Activated B cell treated with CpG ODN at 0.5 μM for 24 hours (primary cell): ENCODE measurements at regions of chr12 and their contacts with region 1.

Region 1: GRCh38 chr12:121590476-121591143 is 9.8 kb upstream of the KDM2B start:
- DNase-seq: peak; percentile 33
- ATAC-seq: peak; percentile 65
- H3K4me3 Mint-ChIP-seq: peak overlapping the region; percentile 81
- H3K27ac Mint-ChIP-seq: peak overlapping the region; percentile 98
- H3K4me1 Mint-ChIP-seq: peaks cover 40% of the 10 kb centered on the region
- H3K27me3 Mint-ChIP-seq: no peaks in the 10 kb centered on the region
- CTCF ChIP-seq: no peak

Region 2: DNA sequence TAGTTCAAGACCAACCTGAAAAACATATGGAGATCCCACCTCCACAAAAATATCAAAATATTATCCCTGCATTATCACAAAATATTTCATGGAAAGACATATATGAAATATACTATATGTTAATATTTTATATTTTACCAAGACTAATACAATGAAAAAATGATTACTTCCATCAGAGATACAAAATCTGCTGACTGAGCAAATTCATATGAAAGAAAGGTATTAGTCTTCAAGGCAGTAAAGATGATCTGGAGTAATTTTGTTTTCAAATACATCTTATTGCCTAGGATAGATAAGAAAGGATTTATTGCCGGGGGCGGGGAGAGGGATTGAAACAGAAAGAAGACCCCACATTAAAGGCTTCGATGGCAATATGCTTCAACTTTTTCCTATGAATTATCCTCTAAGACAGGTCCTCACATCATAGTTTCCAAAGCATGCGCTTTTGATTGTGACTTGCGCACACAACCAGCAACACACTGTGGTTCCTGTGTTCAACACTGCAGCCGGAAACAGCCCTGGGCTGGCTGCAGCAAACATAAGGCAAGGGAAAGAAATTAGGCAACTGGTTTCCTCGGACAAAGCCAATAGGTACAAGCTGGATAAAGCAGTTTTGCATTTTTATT is 769.6 kb before region 1 on chr12:
- CTCF ChIA-PET with region 1: no interaction called
- POLR2A ChIA-PET with region 1: no interaction called
- intact Hi-C with region 1: no loop called
- DNase-seq: no peak
- ATAC-seq: no peak
- H3K4me3 Mint-ChIP-seq: no peak overlapping the region
- H3K27ac Mint-ChIP-seq: no peak overlapping the region
- H3K4me1 Mint-ChIP-seq: peaks cover 23% of the 10 kb centered on the region
- H3K27me3 Mint-ChIP-seq: no peaks in the 10 kb centered on the region
- CTCF ChIP-seq: no peak

Region 3: DNA sequence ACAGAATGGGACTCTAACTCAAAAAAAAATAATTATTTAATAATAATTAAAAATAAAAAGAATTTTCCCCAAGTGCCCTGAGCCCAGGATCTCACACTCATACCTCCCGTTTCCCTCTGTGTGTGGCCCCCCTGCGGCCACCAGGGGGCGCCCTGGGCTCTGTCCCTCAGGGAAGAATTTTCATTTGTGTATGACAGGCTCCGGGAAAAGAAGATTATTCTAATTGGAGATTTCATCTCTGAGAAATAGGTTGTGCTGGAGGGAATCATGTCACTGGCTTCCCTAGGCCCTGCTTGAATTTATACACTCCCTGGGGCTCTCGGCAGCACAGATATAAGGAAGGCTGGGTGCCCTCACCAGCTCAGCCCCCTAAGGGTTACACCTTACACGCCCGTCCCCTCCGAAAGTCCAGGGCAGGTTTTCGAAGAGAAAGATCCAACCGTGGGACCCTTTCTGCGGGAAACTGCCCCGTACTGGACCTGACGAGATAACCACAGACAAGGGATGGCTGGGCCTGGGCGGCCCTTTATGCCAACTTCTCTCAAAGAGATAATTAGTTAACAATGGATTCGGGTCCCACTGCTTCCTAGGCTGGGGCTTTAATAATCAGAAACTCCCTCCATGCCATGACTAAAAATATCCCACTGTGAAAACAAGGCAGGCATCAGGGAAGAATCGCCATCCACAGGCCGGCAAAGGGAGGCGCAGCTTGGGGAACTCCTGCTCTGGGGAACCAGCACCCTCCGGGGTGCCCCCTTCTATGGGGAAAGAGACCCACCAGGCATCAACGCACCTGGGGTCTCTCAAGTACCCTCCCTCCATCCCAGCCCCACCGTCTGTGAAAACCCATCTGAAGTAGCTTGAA is 90.4 kb before region 1 on chr12:
- CTCF ChIA-PET with region 1: no interaction called
- POLR2A ChIA-PET with region 1: interaction called, 3 read pairs
- intact Hi-C with region 1: loop called (anchors 1 kb)
- DNase-seq: peak; percentile 69
- ATAC-seq: peak; percentile 82
- H3K4me3 Mint-ChIP-seq: no peak overlapping the region
- H3K27ac Mint-ChIP-seq: no peak overlapping the region
- H3K4me1 Mint-ChIP-seq: peaks cover 17% of the 10 kb centered on the region
- H3K27me3 Mint-ChIP-seq: no peaks in the 10 kb centered on the region
- CTCF ChIP-seq: peak; percentile 82

Region 4: GRCh38 chr12:121560392-121561008 is 30.1 kb before region 1 on chr12:
- CTCF ChIA-PET with region 1: no interaction called
- POLR2A ChIA-PET with region 1: interaction called, 56 read pairs
- intact Hi-C with region 1: loop called (anchors 1 kb)
- DNase-seq: peak; percentile 58
- ATAC-seq: peak; percentile 79
- H3K4me3 Mint-ChIP-seq: peak overlapping the region; percentile 84
- H3K27ac Mint-ChIP-seq: peak overlapping the region; percentile 97
- H3K4me1 Mint-ChIP-seq: peaks cover 55% of the 10 kb centered on the region
- H3K27me3 Mint-ChIP-seq: no peaks in the 10 kb centered on the region
- CTCF ChIP-seq: no peak

Region 5: DNA sequence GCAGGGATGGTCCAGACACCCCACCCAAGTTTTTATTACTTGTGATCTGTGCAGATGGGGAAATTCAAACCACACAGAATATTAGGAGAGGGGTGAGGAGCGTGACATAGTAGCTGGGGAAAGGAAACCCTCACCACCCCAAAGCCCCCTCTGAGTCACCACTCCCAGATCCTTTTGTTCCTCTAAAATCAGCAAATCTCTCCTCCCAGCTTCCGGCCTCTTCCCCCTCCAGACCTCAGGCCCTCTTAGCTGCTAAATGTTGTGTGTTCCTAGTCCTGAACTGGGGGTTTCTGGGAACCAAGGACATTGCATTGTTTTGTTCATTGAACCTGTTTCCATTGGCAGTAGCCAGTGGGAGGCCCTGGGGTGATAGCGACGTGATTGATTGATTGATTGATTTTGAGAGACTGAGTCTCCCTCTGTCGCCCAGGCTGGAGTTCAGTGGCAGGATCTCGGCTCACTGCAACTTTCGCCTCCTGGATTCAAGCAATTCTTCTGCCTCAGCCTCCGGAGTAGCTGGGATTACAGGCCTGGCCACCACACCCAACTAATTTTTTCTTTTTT is 29.8 kb after region 1 on chr12:
- CTCF ChIA-PET with region 1: interaction called, 5 read pairs
- POLR2A ChIA-PET with region 1: interaction called, 12 read pairs
- intact Hi-C with region 1: no loop called
- DNase-seq: no peak
- ATAC-seq: no peak
- H3K4me3 Mint-ChIP-seq: no peak overlapping the region
- H3K27ac Mint-ChIP-seq: no peak overlapping the region
- H3K4me1 Mint-ChIP-seq: peaks cover 32% of the 10 kb centered on the region
- H3K27me3 Mint-ChIP-seq: no peaks in the 10 kb centered on the region
- CTCF ChIP-seq: no peak

Region 6: DNA sequence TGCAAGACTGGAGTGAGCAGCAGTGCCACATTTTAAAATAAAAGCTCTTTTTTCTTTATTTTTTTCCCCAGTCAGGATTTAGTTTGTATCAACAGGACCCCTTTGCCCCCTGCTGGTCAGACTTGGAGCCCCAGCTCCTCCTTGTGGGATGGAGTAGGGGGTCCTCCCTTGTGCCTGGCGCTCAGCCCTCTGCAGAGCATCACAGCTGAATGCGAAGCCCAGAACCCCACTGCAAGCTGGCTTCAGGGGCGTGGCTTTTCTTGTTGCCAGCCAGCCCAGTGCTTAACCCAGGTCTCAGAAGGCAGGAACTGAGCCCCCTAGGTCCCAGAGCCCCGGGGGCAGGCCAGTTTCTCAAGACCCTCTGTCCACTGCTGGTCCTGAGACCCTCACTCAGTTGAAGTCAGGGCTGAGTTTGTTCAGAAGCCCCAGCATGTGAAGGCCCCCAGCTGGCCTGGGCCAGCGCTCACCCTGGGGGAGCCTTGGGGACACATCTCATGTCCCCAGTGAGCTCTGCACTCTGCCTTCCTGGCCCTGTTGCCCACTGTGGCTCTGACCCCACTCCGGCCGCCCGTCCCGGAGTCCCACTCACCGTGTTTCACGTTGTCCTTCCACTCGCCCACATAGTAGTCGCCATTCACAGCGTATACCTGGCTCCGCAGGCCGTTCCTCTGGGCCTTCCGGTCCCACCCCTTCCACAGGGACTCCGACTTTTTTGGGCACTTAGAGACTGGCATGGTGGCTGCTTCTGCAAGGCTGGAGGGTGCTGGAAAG is 78.3 kb after region 1 on chr12:
- CTCF ChIA-PET with region 1: no interaction called
- POLR2A ChIA-PET with region 1: interaction called, 4 read pairs
- intact Hi-C with region 1: loop called (anchors 1 kb)
- DNase-seq: peak; percentile 38
- ATAC-seq: no peak
- H3K4me3 Mint-ChIP-seq: no peak overlapping the region
- H3K27ac Mint-ChIP-seq: peak overlapping the region; percentile 14
- H3K4me1 Mint-ChIP-seq: peaks cover 49% of the 10 kb centered on the region
- H3K27me3 Mint-ChIP-seq: no peaks in the 10 kb centered on the region
- CTCF ChIP-seq: no peak